ENCODE measurements at regions of chr17 and their contacts with region 1.

Region 1: GRCh38 chr17:18300725-18301480 is 13.9 kb downstream of the TOP3A start:
- DNase-seq: no peak
- H3K4me3 ChIP-seq: no peak overlapping the region
- H3K27ac ChIP-seq: no peak overlapping the region
- H3K4me1 ChIP-seq: no peaks in the 10 kb centered on the region
- H3K27me3 ChIP-seq: no peaks in the 10 kb centered on the region
- CTCF ChIP-seq: no peak

Region 2: GRCh38 chr17:18158022-18158600 is 142.8 kb before region 1 on chr17:
- intact Hi-C with region 1: no loop called
- DNase-seq: peak; percentile 77 to 95
- H3K4me3 ChIP-seq: peak overlapping the region; percentile 49 to 61
- H3K27ac ChIP-seq: peak overlapping the region; percentile 64 to 65
- H3K4me1 ChIP-seq: peaks cover 0 to 8% of the 10 kb centered on the region in 2 donors
- H3K27me3 ChIP-seq: no peaks in the 10 kb centered on the region
- CTCF ChIP-seq: no peak

Region 3: DNA sequence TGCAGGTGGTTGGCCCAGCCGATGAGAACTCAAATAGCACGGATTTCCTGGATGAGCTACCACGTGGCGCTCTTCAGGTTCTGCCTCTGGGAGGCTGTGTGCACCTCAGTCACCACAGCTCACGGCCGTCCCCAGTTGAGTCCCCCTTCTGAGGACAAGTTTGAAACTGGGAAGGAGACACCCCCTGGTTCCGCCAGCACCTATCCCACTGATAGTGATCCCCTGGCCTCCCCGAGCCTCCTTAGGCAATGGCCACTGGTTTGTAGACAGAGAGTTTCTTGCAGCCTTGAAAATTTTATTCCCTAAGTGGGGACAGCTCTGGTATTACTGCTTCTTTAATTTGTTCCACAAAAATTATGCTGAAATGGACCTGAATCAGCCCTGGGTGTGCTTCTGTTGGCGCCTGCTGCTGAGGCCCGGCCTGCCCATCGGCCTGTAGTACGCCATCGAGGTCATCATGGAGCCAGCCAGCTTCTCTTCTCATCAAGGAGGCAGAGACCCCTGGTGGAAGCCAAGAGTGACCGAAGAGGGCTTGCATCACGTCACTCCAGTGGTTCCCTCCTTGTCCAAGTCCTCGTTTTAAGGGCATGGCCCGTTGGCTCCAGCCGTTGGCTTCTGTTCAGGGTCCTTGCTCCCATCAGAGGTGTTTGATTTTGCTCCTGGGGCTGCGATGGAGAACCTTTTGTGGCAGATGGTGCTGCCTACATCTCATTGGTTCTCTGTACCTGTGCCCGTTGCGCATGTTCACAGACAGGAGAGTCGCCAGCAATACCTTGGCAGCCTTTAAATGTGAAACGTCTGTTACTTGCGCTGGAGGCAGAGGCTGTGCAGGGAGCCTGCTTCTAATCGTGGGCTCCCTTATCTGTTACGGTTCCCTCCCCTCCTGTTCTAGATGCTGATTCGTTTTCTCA is 23.5 kb after region 1 on chr17:
- intact Hi-C with region 1: loop called (anchors 2 kb)
- DNase-seq: no peak
- H3K4me3 ChIP-seq: no peak overlapping the region
- H3K27ac ChIP-seq: no peak overlapping the region
- H3K4me1 ChIP-seq: peaks cover 0 to 4% of the 10 kb centered on the region in 2 donors
- H3K27me3 ChIP-seq: no peaks in the 10 kb centered on the region
- CTCF ChIP-seq: no peak